Activated naive CD4-positive, alpha-beta T cell treated with anti-CD3 and anti-CD28 coated beads, Interleukin-2, amount 10 ng/mL, durations not matched to agents 7 days and 5 days (primary cell): ENCODE measurements at regions of chr12 and their contacts with region 1.

Region 1: DNA sequence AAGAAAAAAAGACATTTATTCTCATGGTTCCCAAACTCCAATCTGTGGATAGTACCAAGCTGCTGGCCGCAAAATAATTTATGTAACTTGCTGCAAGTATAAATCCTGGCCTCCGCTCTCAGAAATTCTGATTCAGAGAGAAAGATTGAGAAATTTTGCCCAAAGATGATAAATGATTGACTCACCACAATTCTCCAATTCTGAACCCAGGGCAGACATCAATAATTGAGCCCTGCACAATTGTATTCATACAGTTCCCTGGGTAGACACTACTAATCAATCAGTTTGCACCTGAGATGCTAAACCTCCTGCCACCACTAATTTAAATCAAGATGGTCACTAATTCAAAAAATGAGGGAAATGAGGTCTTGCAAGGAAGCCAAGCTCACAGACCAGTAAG is 38.2 kb downstream of the TRPV4 start:
- DNase-seq: no peak
- H3K4me3 Mint-ChIP-seq: no peak overlapping the region
- H3K27ac Mint-ChIP-seq: no peak overlapping the region
- H3K4me1 Mint-ChIP-seq: no peaks in the 10 kb centered on the region
- H3K27me3 Mint-ChIP-seq: peaks cover 33% of the 10 kb centered on the region

Region 2: GRCh38 chr12:109573029-109573913 is 221.8 kb before region 1 on chr12 and contains the starts of genes MMAB and MVK:
- CTCF ChIA-PET with region 1: no interaction called
- DNase-seq: peak; percentile 100
- H3K4me3 Mint-ChIP-seq: peak within 1 kb of the TSS; percentile 88
- H3K27ac Mint-ChIP-seq: peak within 1 kb of the TSS; percentile 90
- H3K4me1 Mint-ChIP-seq: peaks cover 33% of the 10 kb centered on the region
- H3K27me3 Mint-ChIP-seq: peaks cover 6% of the 10 kb centered on the region

Region 3: GRCh38 chr12:109804820-109805761 is 10.1 kb after region 1 on chr12:
- CTCF ChIA-PET with region 1: interaction called, 10 read pairs
- DNase-seq: peak; percentile 79
- H3K4me3 Mint-ChIP-seq: no peak overlapping the region
- H3K27ac Mint-ChIP-seq: no peak overlapping the region
- H3K4me1 Mint-ChIP-seq: no peaks in the 10 kb centered on the region
- H3K27me3 Mint-ChIP-seq: peaks cover 8% of the 10 kb centered on the region